ENCODE measurements at regions of chr5 and their contacts with region 1.

Region 1: DNA sequence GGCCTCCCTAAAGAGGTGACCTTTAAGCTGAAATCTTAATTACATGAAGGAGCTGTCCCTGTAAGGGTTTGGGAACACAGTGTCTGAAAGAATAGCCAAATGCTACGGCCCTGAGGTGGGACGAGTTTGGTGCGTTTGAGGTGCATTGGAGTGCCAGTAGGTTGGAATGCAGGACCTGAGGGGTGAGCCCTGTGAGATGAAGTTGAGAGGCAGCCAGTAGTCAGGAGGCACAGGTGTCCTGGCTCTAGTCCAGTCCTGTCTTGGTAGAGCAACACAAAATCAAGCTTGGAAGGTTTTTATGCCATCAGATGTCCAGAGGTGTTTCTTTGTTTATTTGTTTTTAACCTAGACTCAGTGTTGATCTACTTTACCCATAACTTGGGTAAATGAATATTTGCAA is 108.5 kb downstream of the ARHGAP26 start:
- DNase-seq: no peak
- H3K4me3 ChIP-seq: no peak overlapping the region
- CTCF ChIP-seq: no peak
- POLR2A ChIP-seq: no peak

Region 2: DNA sequence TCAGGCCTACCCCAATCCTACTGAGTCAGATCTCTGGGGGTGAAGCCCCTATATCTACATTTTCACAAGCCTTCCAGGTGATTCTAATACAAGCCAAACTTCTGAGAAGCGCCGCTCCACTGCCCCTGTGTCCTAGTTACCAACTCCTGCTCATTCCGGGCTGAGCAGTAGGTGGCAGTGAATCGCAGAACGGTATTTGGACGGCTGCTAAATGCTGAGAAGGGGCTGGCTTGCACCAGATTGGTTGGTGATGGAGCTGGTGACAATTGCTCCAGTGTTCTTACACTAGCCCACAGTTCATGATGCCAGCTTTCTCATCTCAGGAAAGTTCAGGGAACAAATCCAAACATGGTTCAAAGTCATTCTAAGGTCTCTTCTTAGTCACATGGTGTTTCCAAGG is 161.7 kb before region 1 on chr5:
- intact Hi-C with region 1: loop called (anchors 5 kb)
- DNase-seq: peak; percentile 52 to 85
- H3K4me3 ChIP-seq: no peak overlapping the region
- CTCF ChIP-seq: no peak
- POLR2A ChIP-seq: no peak

Region 3: GRCh38 chr5:142845402-142845921 is 33.2 kb before region 1 on chr5:
- intact Hi-C with region 1: no loop called
- DNase-seq: no peak
- H3K4me3 ChIP-seq: no peak overlapping the region
- CTCF ChIP-seq: no peak
- POLR2A ChIP-seq: no peak

Region 4: GRCh38 chr5:144191998-144192397 is 1313.4 kb after region 1 on chr5:
- intact Hi-C with region 1: no loop called
- DNase-seq: no peak
- H3K4me3 ChIP-seq: no peak overlapping the region
- CTCF ChIP-seq: no peak
- POLR2A ChIP-seq: no peak

Measured in lower leg skin (tissue), 4 donors.